ENCODE measurements at regions of chr14 and their contacts with region 1.

Region 1: GRCh38 chr14:104985675-104986525 is at the start of gene CLBA1:
- DNase-seq: peak; percentile 88
- H3K4me3 Mint-ChIP-seq: peak within 1 kb of the TSS; percentile 65
- H3K27ac Mint-ChIP-seq: peak within 1 kb of the TSS; percentile 63
- H3K4me1 Mint-ChIP-seq: peaks cover 12% of the 10 kb centered on the region
- H3K27me3 Mint-ChIP-seq: no peaks in the 10 kb centered on the region
- CTCF ChIP-seq: no peak
- total RNA-seq, gene CLBA1: 20.3 and 24.3 TPM in 2 replicates

Region 2: DNA sequence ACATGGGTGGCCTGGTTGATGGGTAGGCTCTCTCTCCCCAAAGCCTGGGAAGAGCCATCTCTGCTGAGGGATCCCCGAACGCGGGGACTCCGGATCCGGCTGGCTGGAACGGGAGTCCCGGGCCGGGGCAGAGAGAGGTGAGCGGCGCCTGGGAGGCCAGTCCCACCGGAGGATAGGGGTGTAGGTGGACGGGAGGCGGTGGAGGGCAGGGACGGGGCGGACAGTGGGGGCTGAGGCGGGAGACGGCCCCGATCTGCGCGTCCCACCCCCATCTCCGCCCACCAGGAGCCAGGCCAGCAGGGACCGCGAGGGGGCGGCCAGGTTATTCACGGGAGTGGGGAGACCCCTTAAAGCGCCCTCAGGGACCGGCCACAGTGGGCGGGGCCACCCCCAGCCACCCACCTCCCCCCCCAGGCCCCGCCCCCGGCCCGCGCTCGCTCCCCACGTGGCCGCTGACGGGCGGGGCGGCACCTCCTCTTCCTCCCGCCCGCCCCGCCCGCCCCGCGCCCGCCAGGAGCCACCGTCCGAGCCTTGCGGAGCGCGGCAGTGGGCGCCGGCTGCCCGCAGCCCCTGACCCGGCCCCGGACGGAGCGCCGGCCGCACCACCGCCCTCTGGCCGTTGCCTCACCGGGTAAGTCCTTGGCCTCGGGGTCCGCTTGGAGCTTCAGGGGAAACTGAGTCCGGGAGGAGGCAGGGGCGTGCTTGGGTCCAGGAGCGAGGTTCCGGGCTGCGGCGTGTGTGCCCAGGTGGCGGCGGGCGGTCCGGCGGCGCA is 296.6 kb before region 1 on chr14 and contains the start of gene INF2:
- CTCF ChIA-PET with region 1: no interaction called
- POLR2A ChIA-PET with region 1: no interaction called
- intact Hi-C with region 1: no loop called
- DNase-seq: peak; percentile 76
- H3K4me3 Mint-ChIP-seq: peak within 1 kb of the TSS; percentile 76
- H3K27ac Mint-ChIP-seq: peak within 1 kb of the TSS; percentile 83
- H3K4me1 Mint-ChIP-seq: peaks cover 24% of the 10 kb centered on the region
- H3K27me3 Mint-ChIP-seq: no peaks in the 10 kb centered on the region
- CTCF ChIP-seq: no peak
- total RNA-seq, gene INF2: 91.6 and 102 TPM in 2 replicates

Region 3: GRCh38 chr14:105015242-105015641 is 29.3 kb after region 1 on chr14:
- CTCF ChIA-PET with region 1: interaction called, 6 read pairs
- POLR2A ChIA-PET with region 1: interaction called, 54 read pairs
- intact Hi-C with region 1: no loop called
- DNase-seq: no peak
- H3K4me3 Mint-ChIP-seq: no peak overlapping the region
- H3K27ac Mint-ChIP-seq: peak overlapping the region; percentile 86
- H3K4me1 Mint-ChIP-seq: peaks cover 40% of the 10 kb centered on the region
- H3K27me3 Mint-ChIP-seq: no peaks in the 10 kb centered on the region
- CTCF ChIP-seq: no peak

Region 4: GRCh38 chr14:105020815-105021655 is 35.1 kb after region 1 on chr14 and contains the start of gene CDCA4:
- CTCF ChIA-PET with region 1: interaction called, 5 read pairs
- POLR2A ChIA-PET with region 1: interaction called, 54 read pairs
- intact Hi-C with region 1: no loop called
- DNase-seq: peak; percentile 96
- H3K4me3 Mint-ChIP-seq: peak within 1 kb of the TSS; percentile 94
- H3K27ac Mint-ChIP-seq: peak within 1 kb of the TSS; percentile 94
- H3K4me1 Mint-ChIP-seq: peaks cover 43% of the 10 kb centered on the region
- H3K27me3 Mint-ChIP-seq: no peaks in the 10 kb centered on the region
- CTCF ChIP-seq: no peak
- total RNA-seq, gene CDCA4: 29.3 and 33.0 TPM in 2 replicates